ENCODE measurements at regions of chr2 and their contacts with region 1.

Region 1: GRCh38 chr2:161946489-161947107 is 127.4 kb downstream of the DPP4 start:
- DNase-seq: no peak
- ATAC-seq: peak; percentile 65

Region 2: GRCh38 chr2:161308178-161308955 is 638.2 kb before region 1 on chr2 and contains the start of gene PSMD14:
- intact Hi-C with region 1: loop called in 1 of 2 experiments (anchors 5 kb)
- DNase-seq: peak; percentile 94
- ATAC-seq: peak; percentile 97
- total RNA-seq, gene PSMD14: 27.2 to 34.5 TPM

Region 3: GRCh38 chr2:161586517-161587167 is 360.0 kb before region 1 on chr2:
- intact Hi-C with region 1: loop called in 1 of 2 experiments (anchors 5 kb)
- DNase-seq: no peak
- ATAC-seq: peak; percentile 45

Measured in left colon (tissue), 2 donors.